ENCODE measurements at regions of chr2 and their contacts with region 1.

Region 1: GRCh38 chr2:113233593-113234550 is 44.8 kb downstream of the PAX8 start:
- DNase-seq: no peak
- ATAC-seq: peak; percentile 67
- H3K4me3 ChIP-seq: peak overlapping the region in 1 of 2 experiments; percentile 93; a peak in 1 of 4 replicates
- H3K27ac ChIP-seq: peak overlapping the region; percentile 95; the same call in 1 of the 2 replicates
- H3K4me1 ChIP-seq: peaks cover 34 to 43% of the 10 kb centered on the region in 2 experiments
- H3K27me3 ChIP-seq: no peaks in the 10 kb centered on the region
- CTCF ChIP-seq: peak in 2 of 3 experiments; percentile 29 to 40; a peak in 3 of 6 replicates
- POLR2A ChIP-seq: no peak
- RAD21 ChIP-seq: no peak

Region 2: DNA sequence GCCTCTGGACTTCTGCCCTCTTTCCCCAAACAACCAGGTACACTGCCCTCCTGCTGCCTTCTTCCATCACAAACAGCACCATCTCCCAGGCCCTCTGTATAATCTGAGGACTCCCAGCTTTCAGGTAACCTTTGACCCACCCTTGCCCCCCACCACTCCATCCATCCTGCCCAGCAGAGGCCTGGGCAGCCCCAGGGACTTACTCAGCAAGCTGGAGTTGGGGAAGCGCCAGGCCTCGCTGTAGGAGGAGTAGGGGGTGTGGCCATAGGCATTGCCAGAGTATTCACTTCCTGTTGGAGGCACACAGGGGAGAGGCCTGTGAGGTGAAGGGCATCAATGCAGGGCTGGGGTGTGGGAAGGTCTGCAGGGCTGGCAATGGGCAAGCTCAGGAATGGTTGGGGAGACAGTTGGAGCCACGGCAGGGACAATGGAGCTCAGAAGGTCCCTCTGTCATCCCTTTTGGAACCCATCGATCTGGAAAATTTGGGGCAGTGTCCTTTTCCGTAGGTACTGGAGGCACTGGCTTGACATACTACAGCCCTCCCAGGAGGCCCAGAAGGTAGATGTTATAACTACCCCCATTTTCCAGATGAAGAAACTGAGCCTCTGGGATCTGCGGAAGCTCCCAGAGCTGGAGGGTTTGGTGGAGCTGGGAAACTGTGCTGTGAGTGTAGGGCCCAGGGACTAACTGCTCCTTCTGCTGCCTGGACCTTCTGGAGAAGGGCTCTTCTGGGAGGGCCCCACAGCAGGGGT is 13.8 kb before region 1 on chr2:
- CTCF ChIA-PET with region 1: interaction called, 3 read pairs
- POLR2A ChIA-PET with region 1: interaction called, 22 read pairs
- RAD21 ChIA-PET with region 1: no interaction called
- intact Hi-C with region 1: no loop called
- DNase-seq: peak; percentile 50
- ATAC-seq: peak; percentile 98
- H3K4me3 ChIP-seq: peak overlapping the region; percentile 15 to 33
- H3K27ac ChIP-seq: peak overlapping the region; percentile 44
- H3K4me1 ChIP-seq: peaks cover 31 to 37% of the 10 kb centered on the region in 2 experiments
- H3K27me3 ChIP-seq: no peaks in the 10 kb centered on the region
- CTCF ChIP-seq: no peak
- POLR2A ChIP-seq: no peak
- RAD21 ChIP-seq: no peak